Activated CD8-positive, alpha-beta T cell treated with anti-CD3 and anti-CD28 coated beads, Interleukin-2, amount 10 ng/mL, durations not matched to agents 7 days and 5 days (primary cell): ENCODE measurements at regions of chr12 and their contacts with region 1.

Region 1: GRCh38 chr12:75390899-75391538 is at the start of gene GLIPR1L2:
- DNase-seq: peak; percentile 92
- ATAC-seq: peak; percentile 98
- H3K4me3 Mint-ChIP-seq: peak within 1 kb of the TSS; percentile 82
- H3K27ac Mint-ChIP-seq: peak within 1 kb of the TSS; percentile 90
- H3K4me1 Mint-ChIP-seq: peaks cover 35% of the 10 kb centered on the region
- H3K27me3 Mint-ChIP-seq: no peaks in the 10 kb centered on the region
- total RNA-seq, gene GLIPR1L2: not detected

Region 2: GRCh38 chr12:75334384-75335030 is 56.5 kb before region 1 on chr12 and contains the start of gene GLIPR1L1:
- CTCF ChIA-PET with region 1: interaction called, 21 read pairs
- POLR2A ChIA-PET with region 1: interaction called, 5 read pairs
- DNase-seq: peak; percentile 88
- ATAC-seq: peak; percentile 83
- H3K4me3 Mint-ChIP-seq: peak within 1 kb of the TSS; percentile 56
- H3K27ac Mint-ChIP-seq: no peak within 1 kb of the TSS
- H3K4me1 Mint-ChIP-seq: peaks cover 33% of the 10 kb centered on the region
- H3K27me3 Mint-ChIP-seq: peaks cover 26% of the 10 kb centered on the region
- total RNA-seq, gene GLIPR1L1: not detected

Region 3: DNA sequence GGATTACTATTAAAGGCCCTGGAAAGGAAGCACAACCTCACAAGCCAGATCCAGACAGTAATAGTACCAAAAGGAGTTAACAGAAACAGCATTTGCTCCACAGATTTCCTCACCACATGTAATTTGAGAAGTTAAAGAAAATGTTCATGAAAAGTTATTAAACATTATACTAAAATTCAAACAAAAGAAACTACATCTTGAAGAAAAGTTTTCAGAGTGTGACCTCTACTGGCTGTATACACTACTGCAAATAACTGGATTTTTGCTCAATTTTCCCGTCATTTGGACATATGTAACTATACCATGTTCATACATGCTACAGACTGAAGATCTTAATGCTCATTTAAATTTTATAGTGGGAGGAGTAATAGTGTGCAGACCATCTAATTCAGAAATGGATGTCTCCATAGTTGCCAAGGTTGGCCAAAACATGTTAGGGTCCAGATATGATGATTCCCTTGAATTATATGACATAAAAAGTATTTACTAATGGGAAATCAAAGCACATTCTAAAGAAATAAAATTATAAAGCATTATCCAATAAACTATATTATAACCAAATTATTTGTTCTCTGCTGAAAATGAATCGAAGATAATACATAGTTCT is 114.8 kb after region 1 on chr12:
- CTCF ChIA-PET with region 1: interaction called, 10 read pairs
- POLR2A ChIA-PET with region 1: interaction called, 5 read pairs
- DNase-seq: no peak
- ATAC-seq: no peak
- H3K4me3 Mint-ChIP-seq: no peak overlapping the region
- H3K27ac Mint-ChIP-seq: no peak overlapping the region
- H3K4me1 Mint-ChIP-seq: peaks cover 26% of the 10 kb centered on the region
- H3K27me3 Mint-ChIP-seq: no peaks in the 10 kb centered on the region

Region 4: DNA sequence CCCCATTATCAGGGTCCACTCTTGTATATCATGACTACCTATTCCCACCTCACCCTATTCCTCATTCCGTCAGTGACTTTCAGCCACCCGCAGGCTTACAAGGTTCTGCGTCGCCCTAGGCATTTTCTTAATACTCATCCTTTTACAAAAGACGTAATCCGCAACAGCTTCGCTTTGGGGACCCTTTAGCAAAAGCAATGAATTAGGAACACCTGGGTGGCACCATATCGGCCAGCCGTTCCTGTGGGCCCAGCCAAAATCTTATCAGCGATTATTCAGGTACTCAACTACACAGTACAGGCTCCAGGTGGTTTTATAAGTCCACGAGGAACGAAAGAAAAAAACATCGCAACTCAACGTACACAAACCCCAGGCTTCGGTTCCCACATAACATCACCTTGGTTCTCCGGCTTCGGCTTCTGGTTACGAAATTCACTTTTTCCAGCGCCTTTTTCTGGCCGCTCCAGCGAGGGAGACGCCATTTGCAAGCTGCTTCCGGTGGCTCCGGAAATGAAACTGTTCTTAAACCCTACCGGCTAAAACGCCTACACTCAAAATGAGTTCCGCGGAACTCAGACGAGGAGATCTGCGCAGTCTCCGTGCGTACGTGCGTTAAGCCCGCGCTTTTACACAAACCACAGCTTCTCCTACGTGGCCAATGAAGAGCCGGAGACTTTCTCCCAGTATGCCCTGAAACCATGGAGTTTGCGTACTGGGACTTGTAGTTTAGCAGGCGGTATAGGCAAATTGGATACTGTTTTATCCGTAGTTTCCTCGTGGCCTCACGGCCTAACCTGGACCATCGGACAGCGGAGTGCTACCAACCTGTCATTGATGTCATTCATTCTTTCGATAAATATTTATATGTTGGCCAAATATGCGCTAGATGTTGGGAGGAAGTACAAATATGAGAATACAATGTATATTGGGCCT is 120.4 kb after region 1 on chr12 and contains the start of gene KRR1:
- CTCF ChIA-PET with region 1: interaction called, 10 read pairs
- POLR2A ChIA-PET with region 1: interaction called, 5 read pairs
- DNase-seq: peak; percentile 96
- ATAC-seq: peak; percentile 97
- H3K4me3 Mint-ChIP-seq: peak within 1 kb of the TSS; percentile 97
- H3K27ac Mint-ChIP-seq: peak within 1 kb of the TSS; percentile 99
- H3K4me1 Mint-ChIP-seq: peaks cover 32% of the 10 kb centered on the region
- H3K27me3 Mint-ChIP-seq: no peaks in the 10 kb centered on the region
- total RNA-seq, gene KRR1: 71.0 to 73.1 TPM

Region 5: DNA sequence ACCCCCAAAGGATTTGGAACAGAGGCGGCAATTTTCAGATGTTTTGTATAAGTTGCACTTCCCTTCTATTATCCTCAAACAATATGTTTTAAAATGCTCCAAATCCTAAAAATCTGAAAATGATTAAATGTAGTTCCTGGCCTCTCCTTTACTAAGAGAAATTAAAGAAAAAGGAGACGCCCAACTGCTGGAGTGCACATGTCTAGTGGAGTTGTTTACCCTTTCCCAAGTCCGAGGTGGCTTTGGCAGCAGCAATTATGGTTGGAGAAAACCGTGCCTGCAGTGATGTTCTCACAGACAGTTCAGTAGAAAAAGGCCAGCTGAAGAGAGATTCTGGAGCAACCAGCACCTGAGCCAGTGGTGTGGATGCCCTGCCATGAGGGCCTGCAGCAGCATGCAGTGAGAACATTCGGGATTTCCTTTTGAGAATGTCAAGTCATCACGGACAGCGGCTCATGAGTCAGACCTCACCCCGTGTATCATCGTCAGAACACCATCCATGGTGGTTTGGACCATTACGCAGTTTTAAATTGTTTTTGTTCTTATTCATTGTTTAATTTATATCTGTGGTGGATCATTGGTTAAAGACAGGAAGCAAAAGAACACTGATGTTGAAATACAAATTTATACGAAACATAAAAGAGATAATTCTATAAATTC is 299.4 kb after region 1 on chr12:
- CTCF ChIA-PET with region 1: no interaction called
- POLR2A ChIA-PET with region 1: no interaction called
- DNase-seq: no peak
- ATAC-seq: no peak
- H3K4me3 Mint-ChIP-seq: no peak overlapping the region
- H3K27ac Mint-ChIP-seq: no peak overlapping the region
- H3K4me1 Mint-ChIP-seq: no peaks in the 10 kb centered on the region
- H3K27me3 Mint-ChIP-seq: peaks cover 8% of the 10 kb centered on the region